Activated CD4-positive, alpha-beta T cell treated with anti-CD3 and anti-CD28 coated beads, Interleukin-2, amount 10 ng/mL, durations not matched to agents 7 days and 5 days (primary cell): ENCODE measurements at regions of chr5 and their contacts with region 1.

Region 1: GRCh38 chr5:39217365-39218281 is 1.7 kb downstream of the FYB1 start:
- DNase-seq: peak; percentile 86
- H3K4me3 Mint-ChIP-seq: peak overlapping the region; percentile 69
- H3K27ac Mint-ChIP-seq: peak overlapping the region; percentile 84
- H3K4me1 Mint-ChIP-seq: peaks cover 67% of the 10 kb centered on the region
- H3K27me3 Mint-ChIP-seq: no peaks in the 10 kb centered on the region

Region 2: DNA sequence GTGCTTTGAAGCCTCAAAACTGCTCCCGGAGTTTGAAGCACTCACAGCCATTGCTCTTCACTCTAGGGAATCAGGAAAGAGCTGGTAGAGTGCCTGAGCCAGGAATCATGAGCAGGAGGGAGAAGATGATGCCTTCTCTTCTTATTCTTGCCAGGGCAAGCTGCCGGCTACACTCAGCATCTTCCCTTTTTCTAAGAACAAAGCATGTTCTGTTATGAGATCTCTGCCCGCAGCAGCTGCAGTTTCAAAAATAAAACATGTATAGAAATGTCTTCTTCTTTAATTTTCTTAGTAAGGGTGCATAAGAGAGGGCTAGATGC is 85.5 kb before region 1 on chr5:
- CTCF ChIA-PET with region 1: no interaction called
- POLR2A ChIA-PET with region 1: no interaction called
- DNase-seq: no peak
- H3K4me3 Mint-ChIP-seq: no peak overlapping the region
- H3K27ac Mint-ChIP-seq: no peak overlapping the region
- H3K4me1 Mint-ChIP-seq: peaks cover 24% of the 10 kb centered on the region
- H3K27me3 Mint-ChIP-seq: no peaks in the 10 kb centered on the region

Region 3: GRCh38 chr5:39177631-39177964 is 40.0 kb before region 1 on chr5:
- CTCF ChIA-PET with region 1: interaction called, 11 read pairs
- POLR2A ChIA-PET with region 1: no interaction called
- DNase-seq: peak; percentile 60
- H3K4me3 Mint-ChIP-seq: peak overlapping the region; percentile 71
- H3K27ac Mint-ChIP-seq: peak overlapping the region; percentile 93
- H3K4me1 Mint-ChIP-seq: peaks cover 97% of the 10 kb centered on the region
- H3K27me3 Mint-ChIP-seq: no peaks in the 10 kb centered on the region

Region 4: GRCh38 chr5:39202597-39203274 is 14.9 kb before region 1 on chr5:
- CTCF ChIA-PET with region 1: interaction called, 30 read pairs
- POLR2A ChIA-PET with region 1: interaction called, 7 read pairs
- DNase-seq: peak; percentile 70
- H3K4me3 Mint-ChIP-seq: peak overlapping the region; percentile 93
- H3K27ac Mint-ChIP-seq: peak overlapping the region; percentile 93
- H3K4me1 Mint-ChIP-seq: peaks cover 38% of the 10 kb centered on the region
- H3K27me3 Mint-ChIP-seq: no peaks in the 10 kb centered on the region

Region 5: DNA sequence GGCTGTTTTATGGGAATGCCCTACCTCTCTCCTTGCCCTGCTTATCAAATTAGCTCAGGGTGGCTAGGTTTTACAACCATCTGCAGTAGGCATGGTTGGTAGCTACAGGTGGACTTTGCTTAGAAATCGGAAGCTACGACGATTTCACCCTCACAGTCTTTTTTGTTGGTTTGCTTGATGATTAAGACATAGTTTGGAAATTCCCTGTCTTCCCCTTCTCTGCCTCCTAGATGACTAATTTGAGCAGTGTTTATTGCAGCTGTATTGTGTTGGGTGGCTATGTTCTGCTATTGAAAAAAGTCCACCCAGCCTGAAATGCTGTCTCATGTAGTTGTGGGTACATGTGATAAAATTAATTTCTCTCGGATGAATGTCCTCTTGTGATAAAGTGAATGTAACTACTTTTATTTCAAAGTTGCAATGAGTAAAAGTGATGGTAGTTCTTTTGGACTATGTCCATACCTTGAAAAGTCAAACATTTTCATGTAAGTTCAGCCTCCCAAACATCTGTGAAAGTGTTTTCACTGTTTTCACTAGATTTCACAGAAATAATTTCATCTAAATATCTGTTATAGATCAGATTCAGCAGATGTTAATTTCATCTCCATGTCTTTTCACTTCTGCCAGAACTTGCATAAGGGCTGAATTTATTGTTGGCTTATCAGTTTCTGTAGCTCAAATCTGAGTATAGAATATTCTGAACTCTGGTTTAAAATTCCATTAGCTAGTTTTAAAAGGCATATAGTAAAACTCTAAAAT is 39.0 kb after region 1 on chr5:
- CTCF ChIA-PET with region 1: interaction called, 21 read pairs
- POLR2A ChIA-PET with region 1: no interaction called
- DNase-seq: no peak
- H3K4me3 Mint-ChIP-seq: no peak overlapping the region
- H3K27ac Mint-ChIP-seq: no peak overlapping the region
- H3K4me1 Mint-ChIP-seq: peaks cover 6% of the 10 kb centered on the region
- H3K27me3 Mint-ChIP-seq: no peaks in the 10 kb centered on the region

Region 6: GRCh38 chr5:39274398-39275085 is 56.9 kb after region 1 on chr5:
- CTCF ChIA-PET with region 1: interaction called, 20 read pairs
- POLR2A ChIA-PET with region 1: no interaction called
- DNase-seq: peak; percentile 20
- H3K4me3 Mint-ChIP-seq: peak overlapping the region; percentile 72
- H3K27ac Mint-ChIP-seq: peak overlapping the region; percentile 96
- H3K4me1 Mint-ChIP-seq: peaks cover 55% of the 10 kb centered on the region
- H3K27me3 Mint-ChIP-seq: no peaks in the 10 kb centered on the region